ENCODE measurements at regions of chr11 and their contacts with region 1.

Region 1: GRCh38 chr11:60913793-60914632 is at the start of gene TMEM109:
- DNase-seq: peak; percentile 89
- H3K4me3 Mint-ChIP-seq: peak within 1 kb of the TSS; percentile 94
- H3K27ac Mint-ChIP-seq: peak within 1 kb of the TSS; percentile 95
- H3K4me1 Mint-ChIP-seq: peaks cover 62% of the 10 kb centered on the region
- H3K27me3 Mint-ChIP-seq: no peaks in the 10 kb centered on the region
- total RNA-seq, gene TMEM109: 94.0 to 103 TPM

Region 2: DNA sequence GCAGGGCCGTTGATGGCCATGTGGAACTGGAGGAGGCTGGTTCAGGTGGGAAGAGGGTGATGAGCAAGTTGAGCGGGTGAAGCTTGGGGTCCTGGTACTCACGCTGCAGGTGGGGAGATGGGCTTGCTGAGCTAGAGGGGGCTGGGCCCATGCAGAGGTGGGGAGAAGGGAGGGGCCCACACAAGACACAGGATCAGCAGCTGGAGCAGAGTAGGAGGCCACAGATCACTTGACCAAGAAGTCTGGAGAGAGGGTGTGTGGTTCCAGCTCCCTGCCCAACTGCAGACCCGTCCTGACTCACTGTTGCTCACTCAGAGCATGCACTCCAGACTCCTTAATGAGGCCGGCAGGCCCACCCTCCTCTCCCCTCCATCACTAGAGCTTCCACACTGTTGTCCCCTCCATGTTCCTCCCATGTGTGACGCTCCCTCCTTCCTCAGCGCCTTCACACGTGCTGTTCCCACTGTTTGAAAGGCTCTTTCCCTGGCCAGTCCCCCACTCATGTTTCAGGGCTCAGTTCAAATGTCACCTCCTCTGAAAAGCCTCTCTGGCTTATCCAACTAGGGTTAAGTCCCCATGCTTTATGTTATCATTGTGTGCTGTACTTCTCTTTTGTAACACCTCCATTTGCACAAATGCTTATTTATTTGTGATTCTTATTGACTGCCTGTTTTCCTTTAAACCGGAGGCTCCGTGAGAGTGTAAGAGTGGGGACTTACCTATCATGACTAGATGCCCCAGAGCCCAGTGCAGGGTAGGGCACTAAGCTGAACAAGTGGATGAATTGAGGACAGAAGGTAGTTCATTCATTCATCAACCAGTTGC is 69.8 kb before region 1 on chr11:
- CTCF ChIA-PET with region 1: no interaction called
- intact Hi-C with region 1: no loop called
- DNase-seq: no peak
- H3K4me3 Mint-ChIP-seq: peak overlapping the region; percentile 78
- H3K27ac Mint-ChIP-seq: no peak overlapping the region
- H3K4me1 Mint-ChIP-seq: peaks cover 33% of the 10 kb centered on the region
- H3K27me3 Mint-ChIP-seq: no peaks in the 10 kb centered on the region

Region 3: DNA sequence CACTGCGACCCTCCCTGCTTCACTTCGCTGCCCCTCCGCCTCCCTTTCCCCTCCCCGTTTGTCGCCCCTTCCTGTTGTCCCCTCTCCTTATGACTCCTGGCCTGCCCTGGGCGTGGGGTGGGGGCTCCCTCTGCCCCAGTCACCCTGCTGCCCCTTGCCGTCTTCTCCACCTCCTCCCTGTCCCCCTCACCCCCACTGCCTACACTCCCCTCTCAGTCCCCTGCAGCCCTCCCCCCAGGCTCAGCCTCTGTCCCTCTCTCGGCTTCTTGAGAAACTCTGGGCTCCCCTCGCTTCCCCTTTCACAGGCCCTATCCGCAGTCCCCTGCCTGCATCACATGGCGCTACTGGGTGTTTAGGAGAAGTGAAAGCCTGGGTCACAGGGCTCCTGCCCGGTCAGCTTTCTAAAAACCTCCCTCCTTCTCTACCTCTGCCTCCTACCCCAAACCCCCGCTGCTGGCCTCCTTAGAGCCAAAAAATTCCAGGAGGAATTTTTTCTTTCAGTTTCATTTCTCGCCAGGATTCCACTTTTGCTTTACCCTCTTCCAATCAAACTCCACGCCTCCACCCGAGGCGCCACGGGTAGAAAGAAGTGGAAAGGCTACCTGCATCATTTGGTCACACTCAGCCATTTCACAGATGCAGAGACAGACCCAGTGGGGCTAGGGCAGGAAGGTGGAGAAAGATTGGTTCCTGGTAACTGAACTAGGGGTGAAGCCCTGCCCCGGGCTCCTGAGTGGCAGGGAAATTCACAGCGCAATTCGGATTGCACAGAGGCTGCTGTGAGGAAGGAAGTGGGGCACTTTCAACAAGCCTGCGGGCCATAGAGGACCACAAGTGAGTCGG is 38.1 kb after region 1 on chr11 and contains the start of gene SLC15A3:
- CTCF ChIA-PET with region 1: no interaction called
- intact Hi-C with region 1: loop called (anchors 2 kb)
- DNase-seq: peak; percentile 64
- H3K4me3 Mint-ChIP-seq: peak within 1 kb of the TSS; percentile 68
- H3K27ac Mint-ChIP-seq: peak within 1 kb of the TSS; percentile 69
- H3K4me1 Mint-ChIP-seq: peaks cover 27% of the 10 kb centered on the region
- H3K27me3 Mint-ChIP-seq: no peaks in the 10 kb centered on the region
- total RNA-seq, gene SLC15A3: 5.6 to 5.8 TPM

Region 4: DNA sequence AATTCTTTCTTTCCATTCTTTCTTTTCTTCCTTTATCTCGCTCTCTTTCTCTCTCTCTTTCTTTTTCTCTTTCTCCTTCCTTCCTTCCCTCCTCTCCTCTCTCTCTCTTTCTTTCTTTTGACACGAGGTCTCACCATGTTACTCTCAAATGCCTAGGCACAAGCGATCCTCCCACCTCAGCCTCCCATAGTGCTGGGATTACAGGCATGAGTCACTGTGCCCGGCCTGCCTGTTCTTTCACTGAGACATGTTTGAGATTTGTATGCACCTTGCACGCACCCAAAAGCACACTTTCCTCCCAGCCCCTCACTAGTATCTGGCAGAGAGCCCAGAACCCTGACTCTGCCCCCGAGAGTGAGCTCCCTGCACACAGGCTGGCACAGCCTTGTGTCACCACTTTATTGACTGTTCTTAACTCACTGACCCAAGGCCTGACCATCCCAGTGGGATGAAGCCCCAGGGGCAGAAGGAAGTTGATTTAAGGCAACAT is 114.3 kb after region 1 on chr11:
- CTCF ChIA-PET with region 1: no interaction called
- intact Hi-C with region 1: loop called (anchors 1 kb)
- DNase-seq: peak; percentile 93
- H3K4me3 Mint-ChIP-seq: peak overlapping the region; percentile 87
- H3K27ac Mint-ChIP-seq: peak overlapping the region; percentile 100
- H3K4me1 Mint-ChIP-seq: peaks cover 82% of the 10 kb centered on the region
- H3K27me3 Mint-ChIP-seq: no peaks in the 10 kb centered on the region

Region 5: GRCh38 chr11:61102667-61103571 is 188.9 kb after region 1 on chr11:
- CTCF ChIA-PET with region 1: no interaction called
- intact Hi-C with region 1: loop called (anchors 2 kb)
- DNase-seq: peak; percentile 67
- H3K4me3 Mint-ChIP-seq: no peak overlapping the region
- H3K27ac Mint-ChIP-seq: no peak overlapping the region
- H3K4me1 Mint-ChIP-seq: peaks cover 31% of the 10 kb centered on the region
- H3K27me3 Mint-ChIP-seq: no peaks in the 10 kb centered on the region